ENCODE measurements at regions of chr18 and their contacts with region 1.

Region 1: DNA sequence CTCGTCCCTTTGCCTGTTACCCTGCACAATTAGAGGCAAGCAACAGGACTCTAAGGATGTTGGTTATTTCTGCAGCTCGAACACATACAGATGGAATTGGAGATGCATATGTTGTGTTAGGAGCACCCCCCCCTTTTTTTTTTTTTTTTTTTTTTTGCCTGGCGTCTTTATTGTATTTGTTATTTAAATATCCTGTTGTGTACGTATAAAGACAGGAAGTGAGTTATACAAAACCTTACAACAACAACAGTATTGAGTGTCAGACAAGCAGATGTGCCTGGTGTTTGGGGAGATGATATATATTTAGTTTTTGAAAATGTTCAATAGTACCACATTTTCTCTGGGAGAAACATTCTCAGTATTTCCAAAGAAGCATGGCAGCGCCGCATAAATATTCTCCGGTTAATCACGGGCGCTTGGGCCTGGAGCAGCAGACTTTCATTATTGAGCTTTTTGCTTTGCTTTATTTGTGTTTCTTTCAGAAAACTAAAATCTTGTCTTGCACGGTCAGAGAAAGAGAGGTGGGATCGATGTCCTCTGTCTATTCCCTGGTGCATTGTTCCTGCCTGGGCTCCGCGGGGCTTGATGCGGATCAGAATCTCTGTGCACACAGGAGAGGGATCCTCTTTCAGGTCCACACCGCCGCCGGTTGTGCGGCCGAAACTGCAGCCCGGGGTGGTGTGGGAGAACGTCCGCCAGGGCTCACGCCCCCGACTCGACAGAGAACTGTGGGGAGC is 23.2 kb upstream of the ZNF516 start:
- DNase-seq: peak; percentile 74 to 81 (median 80)
- H3K4me3 ChIP-seq: peak overlapping the region; percentile 33
- H3K27ac ChIP-seq: peak overlapping the region; percentile 63 to 90
- H3K4me1 ChIP-seq: peaks cover 6% of the 10 kb centered on the region
- H3K27me3 ChIP-seq: no peaks in the 10 kb centered on the region
- CTCF ChIP-seq: peak in 1 of 3 donors; percentile 7
- EP300 ChIP-seq: no peak
- POLR2A ChIP-seq: no peak

Region 2: DNA sequence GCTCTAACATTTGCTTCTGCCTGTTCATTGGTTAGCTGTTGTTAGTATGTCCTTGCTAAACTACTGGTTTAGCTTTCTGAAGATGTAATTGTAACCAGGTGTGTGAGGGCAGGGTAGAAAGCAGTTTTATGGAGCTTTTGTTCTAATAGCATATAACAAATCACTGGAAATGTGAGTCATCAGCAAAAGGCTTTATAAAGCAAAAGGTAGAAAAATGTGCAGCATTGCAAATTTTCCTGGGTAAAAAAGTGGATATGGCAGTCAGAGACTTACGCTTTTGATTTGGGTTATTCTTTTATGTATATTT is 1835.3 kb before region 1 on chr18:
- intact Hi-C with region 1: no loop called
- DNase-seq: no peak
- H3K4me3 ChIP-seq: no peak overlapping the region
- H3K27ac ChIP-seq: no peak overlapping the region
- H3K4me1 ChIP-seq: no peaks in the 10 kb centered on the region
- H3K27me3 ChIP-seq: no peaks in the 10 kb centered on the region
- CTCF ChIP-seq: no peak
- EP300 ChIP-seq: no peak
- POLR2A ChIP-seq: no peak

Region 3: GRCh38 chr18:76252880-76253279 is 265.4 kb before region 1 on chr18:
- intact Hi-C with region 1: no loop called
- DNase-seq: no peak
- H3K4me3 ChIP-seq: no peak overlapping the region
- H3K27ac ChIP-seq: no peak overlapping the region
- H3K4me1 ChIP-seq: peaks cover 11% of the 10 kb centered on the region
- H3K27me3 ChIP-seq: no peaks in the 10 kb centered on the region
- CTCF ChIP-seq: no peak
- EP300 ChIP-seq: no peak
- POLR2A ChIP-seq: no peak

Region 4: DNA sequence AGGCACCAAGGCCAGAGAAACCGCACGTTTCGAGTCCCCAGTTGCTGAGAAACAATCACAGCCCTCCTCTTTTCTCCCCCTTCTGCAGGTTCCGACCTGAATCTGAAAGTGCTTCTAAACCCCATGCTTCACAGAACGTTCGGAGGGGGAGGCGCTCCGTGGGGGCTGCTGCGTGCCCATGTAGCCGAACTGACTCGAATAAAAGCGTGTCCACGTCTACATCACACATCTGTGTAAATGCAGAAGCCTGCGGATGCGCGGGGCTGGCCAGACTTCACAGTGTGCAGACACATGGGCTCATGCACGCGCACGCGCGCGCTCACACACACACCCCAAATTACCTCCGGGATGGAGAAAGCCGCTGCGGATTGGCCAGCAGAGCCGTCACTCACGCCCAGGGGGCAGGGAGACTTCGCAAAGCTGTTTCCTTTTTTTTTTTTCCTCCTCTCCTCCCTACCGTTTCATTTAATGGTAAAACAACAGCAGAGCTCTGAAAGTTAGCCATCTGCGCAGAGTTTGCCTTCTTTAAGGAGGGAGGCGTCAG is 25.6 kb before region 1 on chr18:
- intact Hi-C with region 1: loop called in 1 of 4 experiments (anchors 2 kb)
- DNase-seq: peak; percentile 100
- H3K4me3 ChIP-seq: peak overlapping the region; percentile 70
- H3K27ac ChIP-seq: peak overlapping the region; percentile 80 to 89
- H3K4me1 ChIP-seq: peaks cover 2% of the 10 kb centered on the region
- H3K27me3 ChIP-seq: no peaks in the 10 kb centered on the region
- CTCF ChIP-seq: peak in 1 of 3 donors; percentile 10
- EP300 ChIP-seq: no peak
- POLR2A ChIP-seq: peak; percentile 62

Region 5: GRCh38 chr18:76499637-76500340 is 18.5 kb before region 1 on chr18:
- intact Hi-C with region 1: loop called in 2 of 4 experiments (anchors 2 kb)
- DNase-seq: no peak
- H3K4me3 ChIP-seq: no peak overlapping the region
- H3K27ac ChIP-seq: peak overlapping the region in 1 of 2 donors; percentile 44
- H3K4me1 ChIP-seq: no peaks in the 10 kb centered on the region
- H3K27me3 ChIP-seq: no peaks in the 10 kb centered on the region
- CTCF ChIP-seq: no peak
- EP300 ChIP-seq: no peak
- POLR2A ChIP-seq: no peak